Cardiac septum (tissue), 1 donor: ENCODE measurements at regions of chr17 and their contacts with region 1.

Region 1: DNA sequence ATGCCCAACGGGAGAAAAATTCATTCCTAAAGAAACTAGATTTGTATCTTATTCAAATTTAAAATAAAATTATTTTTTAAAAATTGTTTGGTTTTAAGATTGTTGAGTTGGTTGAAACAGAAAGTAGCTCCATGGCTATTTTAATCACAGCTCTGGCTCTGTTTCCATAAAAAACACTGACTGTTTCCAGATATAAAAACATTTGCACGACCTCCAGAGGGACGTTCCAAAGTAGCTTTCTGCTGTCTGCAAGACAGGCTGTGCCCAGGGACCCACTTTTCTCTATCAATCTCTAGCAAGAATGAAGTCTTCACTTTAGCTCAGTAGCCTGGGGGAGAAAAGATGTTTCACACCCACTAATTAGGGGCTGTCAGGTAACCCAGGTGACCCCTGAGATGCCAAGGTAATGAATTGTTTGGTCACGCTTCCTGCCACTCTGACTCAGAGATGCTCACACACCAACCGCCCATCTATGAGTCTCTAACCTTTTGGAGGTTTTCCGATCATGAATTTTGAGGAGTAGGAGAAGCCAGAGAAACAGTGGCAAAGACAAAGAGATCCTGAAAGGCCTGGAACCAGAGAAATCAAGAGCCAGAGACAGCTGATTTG is 220.1 kb upstream of the SOX9 start:
- DNase-seq: no peak

Region 2: GRCh38 chr17:71709946-71710345 is 190.8 kb before region 1 on chr17:
- intact Hi-C with region 1: no loop called
- DNase-seq: no peak

Region 3: GRCh38 chr17:71919186-71919585 is 18.5 kb after region 1 on chr17:
- intact Hi-C with region 1: no loop called
- DNase-seq: no peak

Region 4: GRCh38 chr17:71983828-71984227 is 83.1 kb after region 1 on chr17:
- intact Hi-C with region 1: loop called (anchors 5 kb)
- DNase-seq: no peak

Region 5: DNA sequence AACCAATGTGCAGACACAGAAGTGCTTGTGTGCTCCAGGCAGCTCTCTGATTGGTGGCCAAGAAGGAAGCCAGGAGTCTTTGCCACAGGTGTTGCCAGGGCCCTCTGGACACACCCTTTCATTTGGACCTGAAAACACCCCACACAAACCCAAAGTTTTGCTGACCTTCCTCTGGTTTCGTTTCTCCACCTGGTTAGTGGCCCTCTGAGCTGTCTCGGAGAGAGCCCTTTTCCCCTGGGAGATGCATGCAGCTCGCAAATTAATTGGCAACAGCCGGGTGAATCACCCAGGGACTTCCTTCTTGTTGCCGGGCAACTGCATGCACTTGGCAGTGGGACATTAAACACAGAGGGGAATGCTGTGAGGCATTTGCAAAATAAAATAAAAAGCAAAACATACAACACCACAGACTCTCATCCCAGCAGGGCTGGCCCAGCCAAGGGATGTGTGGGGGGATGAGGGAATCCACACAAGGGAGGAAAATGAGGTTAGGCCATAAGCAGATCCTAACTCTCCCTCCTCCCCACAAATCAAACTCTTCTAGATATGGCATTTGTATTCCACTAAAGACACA is 506.7 kb after region 1 on chr17:
- intact Hi-C with region 1: no loop called
- DNase-seq: no peak